Prostate gland (tissue), 2 donors: ENCODE measurements at regions of chrX and their contacts with region 1.

Region 1: GRCh38 chrX:155094468-155095061 is 23.3 kb downstream of the BRCC3 start:
- DNase-seq: no peak
- H3K4me3 ChIP-seq: no peak overlapping the region
- H3K27ac ChIP-seq: no peak overlapping the region
- H3K4me1 ChIP-seq: no peaks in the 10 kb centered on the region
- H3K27me3 ChIP-seq: no peaks in the 10 kb centered on the region
- CTCF ChIP-seq: peak in 3 of 4 experiments; percentile 44 to 60 (median 55)
- POLR2A ChIP-seq: no peak

Region 2: DNA sequence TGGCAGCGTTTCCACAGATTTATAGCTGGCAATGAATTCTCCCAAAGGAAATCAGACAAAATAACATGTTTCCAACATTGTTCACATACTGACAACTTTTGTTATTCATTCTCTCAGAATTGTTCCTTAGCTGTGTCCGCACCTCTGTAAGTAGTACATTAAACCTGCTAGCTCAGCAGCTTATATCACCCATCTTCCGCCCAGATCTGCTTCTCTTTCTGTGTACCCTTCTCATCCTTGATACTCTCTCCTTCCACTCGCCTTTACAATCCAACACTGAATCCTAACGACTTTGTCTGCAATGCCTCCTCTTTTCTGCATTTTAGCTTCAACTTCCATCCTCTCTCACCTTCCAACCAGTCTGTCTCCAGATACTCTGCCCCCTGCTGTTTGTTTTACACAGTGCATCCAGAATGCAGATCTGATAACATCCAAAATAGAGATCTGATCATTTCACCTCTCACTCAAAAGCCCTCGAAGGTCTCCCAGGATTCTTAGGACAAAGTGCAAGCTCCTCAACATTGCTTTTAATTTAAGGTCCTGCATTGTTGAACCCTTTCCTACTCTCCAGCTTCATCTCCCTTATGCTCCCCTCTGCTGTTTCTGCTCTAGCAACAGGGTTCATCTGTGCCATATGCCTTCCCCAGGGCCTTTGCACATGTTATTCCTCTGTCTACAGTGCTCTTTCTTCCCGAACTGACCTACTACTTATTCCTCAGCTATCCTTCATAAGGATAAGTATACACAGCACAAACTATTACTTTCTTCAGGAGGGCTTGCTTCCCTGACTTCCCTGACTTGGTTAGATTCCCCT is 54.4 kb after region 1 on chrX:
- intact Hi-C with region 1: loop called (anchors 10 kb)
- DNase-seq: no peak
- H3K4me3 ChIP-seq: no peak overlapping the region
- H3K27ac ChIP-seq: no peak overlapping the region
- H3K4me1 ChIP-seq: no peaks in the 10 kb centered on the region
- H3K27me3 ChIP-seq: no peaks in the 10 kb centered on the region
- CTCF ChIP-seq: peak in 1 of 4 experiments; percentile 9
- POLR2A ChIP-seq: no peak

Region 3: DNA sequence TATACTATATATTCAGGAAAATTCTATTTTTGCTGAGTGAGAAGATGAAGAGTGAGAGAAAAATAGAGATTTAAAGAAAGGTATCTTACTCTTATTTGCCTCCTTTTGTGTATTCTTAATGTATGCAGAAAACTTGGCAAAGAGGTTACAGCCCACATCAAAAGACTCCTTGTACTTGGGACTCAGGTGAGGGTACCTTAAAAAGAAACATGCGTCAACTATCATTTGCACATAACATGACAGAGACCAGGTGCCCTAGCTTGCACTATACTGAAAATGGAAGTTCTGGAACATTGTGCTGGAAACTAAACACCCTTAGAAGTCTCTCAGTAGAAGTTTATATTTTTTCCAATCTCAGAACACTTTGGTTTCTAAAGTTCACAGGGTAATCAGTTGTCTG is 185.3 kb after region 1 on chrX:
- intact Hi-C with region 1: no loop called
- DNase-seq: no peak
- H3K4me3 ChIP-seq: no peak overlapping the region
- H3K27ac ChIP-seq: no peak overlapping the region
- H3K4me1 ChIP-seq: no peaks in the 10 kb centered on the region
- H3K27me3 ChIP-seq: no peaks in the 10 kb centered on the region
- CTCF ChIP-seq: no peak
- POLR2A ChIP-seq: no peak

Region 4: DNA sequence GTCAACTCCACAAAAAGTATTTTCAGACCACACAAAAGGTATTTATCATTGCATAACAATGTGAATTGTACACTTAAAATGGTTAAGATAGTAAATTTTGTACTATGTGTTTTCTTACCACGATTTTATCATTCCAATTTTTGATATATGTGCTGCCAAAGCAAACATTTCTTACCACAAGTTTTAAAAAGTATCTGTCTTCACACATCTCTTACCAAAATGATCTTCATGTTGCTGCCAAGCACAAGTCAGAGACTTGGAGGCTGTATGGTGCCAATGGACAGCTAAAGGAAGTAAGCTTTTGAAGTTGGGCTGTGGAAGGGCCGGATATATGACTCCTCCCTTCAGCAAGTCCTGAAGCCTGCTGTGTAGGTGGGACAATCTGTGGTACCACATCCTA is 450.3 kb after region 1 on chrX:
- intact Hi-C with region 1: no loop called
- DNase-seq: no peak
- H3K4me3 ChIP-seq: no peak overlapping the region
- H3K27ac ChIP-seq: no peak overlapping the region
- H3K4me1 ChIP-seq: no peaks in the 10 kb centered on the region
- H3K27me3 ChIP-seq: no peaks in the 10 kb centered on the region
- CTCF ChIP-seq: no peak
- POLR2A ChIP-seq: no peak